ENCODE measurements at regions of chr18 and their contacts with region 1.

Region 1: GRCh38 chr18:3281456-3282400 is 19.8 kb downstream of the MYL12B start:
- DNase-seq: no peak
- H3K4me3 ChIP-seq: peak overlapping the region in 14 of 59 donors; percentile 3 to 57 (median 40)
- H3K27ac ChIP-seq: peak overlapping the region in 47 of 59 donors; percentile 3 to 92 (median 79)
- H3K27me3 ChIP-seq: no peaks in the 10 kb centered on the region
- CTCF ChIP-seq: peak; percentile 56 to 95 (median 86)

Region 2: GRCh38 chr18:3447895-3448837 is 166.4 kb after region 1 on chr18:
- intact Hi-C with region 1: loop called (anchors 2 to 5 kb)
- DNase-seq: peak; percentile 54 to 90 (median 84)
- H3K4me3 ChIP-seq: peak overlapping the region; percentile 41 to 87 (median 70)
- H3K27ac ChIP-seq: peak overlapping the region; percentile 83 to 99 (median 96)
- H3K27me3 ChIP-seq: peaks cover 0 to 55% (median 6%) of the 10 kb centered on the region in 45 donors
- CTCF ChIP-seq: peak in 30 of 56 donors; percentile 7 to 57 (median 27)

Region 3: DNA sequence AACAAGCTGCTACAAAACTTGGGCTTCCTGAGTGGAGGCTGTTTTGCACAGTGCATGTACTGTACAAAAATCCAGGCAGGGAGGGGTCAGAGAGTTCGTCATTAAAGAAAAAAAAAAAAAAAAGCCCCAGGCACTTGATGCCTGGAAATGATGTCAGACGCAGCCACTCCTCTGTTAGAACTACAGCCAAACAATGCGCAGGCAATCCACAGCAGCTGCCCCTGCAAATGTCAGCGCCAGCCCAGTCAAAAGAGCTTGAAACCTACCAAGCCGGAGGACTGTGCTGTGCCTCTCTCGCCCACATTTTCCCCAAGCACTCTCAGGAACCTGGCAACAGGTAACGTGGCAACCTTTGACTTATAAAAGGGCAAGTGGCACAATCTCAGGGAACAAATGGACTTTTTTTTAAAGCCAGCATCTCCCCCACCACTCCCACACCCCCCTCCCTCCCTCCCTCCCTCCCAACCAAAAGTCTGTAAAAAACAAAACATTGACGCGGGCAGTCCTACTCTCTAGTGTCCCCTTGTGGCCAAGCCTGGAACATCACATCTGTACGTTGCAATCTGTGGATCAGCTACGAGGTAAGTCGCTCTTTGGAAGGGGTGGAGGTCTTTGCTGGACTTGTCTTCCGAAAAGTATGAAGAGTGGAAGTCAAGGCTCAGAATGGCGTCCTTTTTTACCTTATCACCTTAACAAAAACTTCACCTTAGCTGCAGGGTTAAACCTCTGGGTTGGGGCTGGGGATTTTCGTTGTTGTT is 312.4 kb after region 1 on chr18:
- intact Hi-C with region 1: loop called (anchors 5 kb)
- DNase-seq: peak; percentile 72 to 94 (median 85)
- H3K4me3 ChIP-seq: peak overlapping the region; percentile 23 to 73 (median 59)
- H3K27ac ChIP-seq: peak overlapping the region; percentile 81 to 99 (median 97)
- H3K27me3 ChIP-seq: no peaks in the 10 kb centered on the region
- CTCF ChIP-seq: peak; percentile 62 to 91 (median 83)

Region 4: GRCh38 chr18:3771121-3771971 is 489.6 kb after region 1 on chr18:
- intact Hi-C with region 1: loop called in 1 of 2 experiments (anchors 10 kb)
- DNase-seq: peak; percentile 76 to 94 (median 84)
- H3K4me3 ChIP-seq: peak overlapping the region; percentile 15 to 71 (median 51)
- H3K27ac ChIP-seq: peak overlapping the region in 58 of 59 donors; percentile 23 to 89 (median 71)
- H3K27me3 ChIP-seq: no peaks in the 10 kb centered on the region
- CTCF ChIP-seq: peak; percentile 81 to 99 (median 96)